CD4-positive, alpha-beta memory T cell (primary cell): ENCODE measurements at regions of chr22 and their contacts with region 1.

Region 1: DNA sequence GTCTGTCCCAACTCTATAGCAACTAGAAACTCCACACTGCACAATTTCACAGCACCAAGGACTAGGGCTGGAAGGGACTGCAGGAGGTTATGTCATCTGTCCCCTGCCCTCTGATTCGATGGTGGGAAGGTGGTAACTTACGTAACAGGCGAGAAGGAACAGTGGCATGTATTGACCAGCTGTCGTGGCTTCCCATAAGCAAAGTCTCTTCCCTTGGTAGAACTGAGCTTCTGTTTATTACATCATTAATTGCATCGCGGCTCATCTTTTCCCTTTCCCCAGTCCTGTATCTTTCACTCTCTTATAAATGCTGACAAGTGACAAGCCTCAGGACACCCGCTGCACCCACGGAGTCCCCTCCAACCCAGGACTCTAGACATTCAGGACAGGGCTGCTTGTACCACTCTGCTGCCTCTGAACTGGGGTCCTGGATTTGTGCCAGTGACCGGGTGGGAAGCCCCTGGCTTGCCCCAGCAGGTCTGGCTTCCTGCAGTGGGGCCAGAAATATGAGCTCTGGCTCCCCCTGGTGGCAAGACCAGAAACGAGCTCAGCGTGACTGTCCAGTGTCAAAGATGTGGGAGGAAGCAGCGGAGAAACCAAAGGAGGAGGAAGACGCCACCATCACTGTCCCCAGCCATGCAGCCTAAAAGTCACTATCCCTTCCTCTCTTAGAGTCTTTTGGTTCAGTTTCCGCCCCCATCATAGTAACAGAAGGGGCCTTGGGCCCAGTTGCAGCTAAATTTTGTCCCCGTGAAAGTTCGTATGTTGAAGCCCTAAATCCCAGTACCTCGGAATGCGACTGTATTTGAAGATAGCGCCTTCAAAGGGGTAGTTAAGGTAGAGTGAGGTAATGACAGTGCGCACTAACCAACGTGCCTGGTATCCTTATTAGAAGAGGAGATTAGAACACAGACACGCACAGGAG is 84.5 kb downstream of the ISX start:
- DNase-seq: peak in 4 of 5 donors; percentile 13 to 37 (median 30)
- H3K4me3 ChIP-seq: no peak overlapping the region
- H3K4me3 Mint-ChIP-seq: no peak overlapping the region
- H3K27ac ChIP-seq: no peak overlapping the region
- H3K27ac Mint-ChIP-seq: no peak overlapping the region
- H3K4me1 ChIP-seq: no peaks in the 10 kb centered on the region
- H3K4me1 Mint-ChIP-seq: peaks cover 0 to 5% (median 2%) of the 10 kb centered on the region in 4 donors
- H3K27me3 ChIP-seq: no peaks in the 10 kb centered on the region
- H3K27me3 Mint-ChIP-seq: peaks cover 18 to 38% of the 10 kb centered on the region in 2 donors

Region 2: DNA sequence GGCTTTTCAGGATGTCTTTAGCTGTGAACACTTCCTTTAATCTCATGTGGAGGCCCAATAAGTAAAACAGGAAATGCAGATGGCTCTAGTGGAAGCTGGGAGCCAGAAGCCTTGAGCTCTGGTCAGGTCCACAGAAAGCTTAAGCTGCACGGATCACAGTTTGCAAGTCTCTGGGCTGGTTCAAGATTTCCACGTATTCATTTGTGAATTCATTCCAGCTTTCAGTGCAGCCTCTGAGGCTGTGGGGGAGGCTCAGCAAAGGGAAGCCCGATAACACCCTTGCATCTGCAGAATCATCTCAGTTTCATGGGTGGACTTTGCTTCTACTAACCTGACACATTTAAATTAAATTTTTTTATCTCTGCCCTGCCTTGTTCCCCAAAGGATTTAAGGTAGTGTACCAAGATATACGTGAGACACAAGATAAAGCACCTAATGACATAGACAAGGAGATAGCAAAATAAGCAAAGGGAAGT is 18.9 kb before region 1 on chr22:
- CTCF ChIA-PET with region 1: interaction called, 13 read pairs
- POLR2A ChIA-PET with region 1: no interaction called
- intact Hi-C with region 1: no loop called
- DNase-seq: no peak
- H3K4me3 ChIP-seq: no peak overlapping the region
- H3K4me3 Mint-ChIP-seq: no peak overlapping the region
- H3K27ac ChIP-seq: no peak overlapping the region
- H3K27ac Mint-ChIP-seq: peak overlapping the region in 1 of 7 donors; percentile 1
- H3K4me1 ChIP-seq: no peaks in the 10 kb centered on the region
- H3K4me1 Mint-ChIP-seq: peaks cover 0 to 4% (median 1%) of the 10 kb centered on the region in 4 donors
- H3K27me3 ChIP-seq: peaks cover 9% of the 10 kb centered on the region
- H3K27me3 Mint-ChIP-seq: peaks cover 18 to 37% of the 10 kb centered on the region in 2 donors

Region 3: DNA sequence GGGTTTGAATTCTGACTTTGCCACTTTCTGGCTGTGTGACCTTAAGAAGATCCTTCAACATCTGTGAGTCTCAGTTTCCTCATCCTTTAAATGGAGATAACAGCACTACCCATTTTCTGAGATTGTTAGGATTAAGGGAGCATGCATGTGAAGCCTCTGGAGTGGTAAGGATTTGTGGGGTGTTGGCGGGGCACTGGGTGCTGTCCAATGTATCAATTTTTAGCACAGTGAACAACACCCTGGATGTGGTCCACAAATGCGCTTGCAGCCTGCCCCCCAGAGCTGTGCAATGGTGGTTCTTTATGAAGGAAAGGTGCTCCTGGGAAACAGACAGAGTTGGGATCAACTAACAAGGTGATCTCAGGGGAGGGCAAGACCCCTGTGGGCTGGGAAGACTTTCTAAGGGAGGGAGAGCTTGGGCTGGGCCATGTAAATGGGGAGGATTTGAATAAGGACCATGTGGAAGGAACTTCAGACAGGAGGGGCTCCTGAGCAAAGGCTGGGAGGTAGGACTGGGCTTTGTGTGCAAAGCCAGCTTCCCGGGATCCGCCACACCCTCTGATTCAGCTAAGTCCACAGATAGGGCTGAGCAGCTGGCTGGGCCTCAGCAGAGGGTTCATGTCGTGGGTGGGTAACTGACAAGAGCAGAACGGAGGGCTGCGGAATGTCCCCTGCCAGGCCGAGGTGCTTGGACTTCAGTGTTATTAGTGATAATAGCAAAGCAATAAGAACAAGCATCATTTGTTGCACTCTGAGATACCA is 367.5 kb after region 1 on chr22:
- CTCF ChIA-PET with region 1: no interaction called
- POLR2A ChIA-PET with region 1: no interaction called
- intact Hi-C with region 1: no loop called
- DNase-seq: no peak
- H3K4me3 ChIP-seq: no peak overlapping the region
- H3K4me3 Mint-ChIP-seq: no peak overlapping the region
- H3K27ac ChIP-seq: no peak overlapping the region
- H3K27ac Mint-ChIP-seq: no peak overlapping the region
- H3K4me1 ChIP-seq: no peaks in the 10 kb centered on the region
- H3K4me1 Mint-ChIP-seq: no peaks in the 10 kb centered on the region
- H3K27me3 ChIP-seq: no peaks in the 10 kb centered on the region
- H3K27me3 Mint-ChIP-seq: peaks cover 18 to 48% of the 10 kb centered on the region in 2 donors